Activated naive CD8-positive, alpha-beta T cell treated with anti-CD3 and anti-CD28 coated beads, Interleukin-2, amount 10 ng/mL, durations not matched to agents 7 days and 5 days (primary cell): ENCODE measurements at regions of chr6 and their contacts with region 1.

Region 1: GRCh38 chr6:27809939-27810767 is 102.0 kb downstream of the OR2B2 start:
- DNase-seq: peak; percentile 83
- ATAC-seq: peak; percentile 38
- H3K4me3 Mint-ChIP-seq: peak overlapping the region; percentile 89
- H3K27ac Mint-ChIP-seq: peak overlapping the region; percentile 97
- H3K4me1 Mint-ChIP-seq: peaks cover 52% of the 10 kb centered on the region
- H3K27me3 Mint-ChIP-seq: no peaks in the 10 kb centered on the region

Region 2: GRCh38 chr6:26045065-26045927 is 1764.9 kb before region 1 on chr6:
- POLR2A ChIA-PET with region 1: interaction called, 14 read pairs
- DNase-seq: peak; percentile 82
- ATAC-seq: peak; percentile 56
- H3K4me3 Mint-ChIP-seq: peak overlapping the region; percentile 86
- H3K27ac Mint-ChIP-seq: peak overlapping the region; percentile 99
- H3K4me1 Mint-ChIP-seq: peaks cover 41% of the 10 kb centered on the region
- H3K27me3 Mint-ChIP-seq: no peaks in the 10 kb centered on the region

Region 3: DNA sequence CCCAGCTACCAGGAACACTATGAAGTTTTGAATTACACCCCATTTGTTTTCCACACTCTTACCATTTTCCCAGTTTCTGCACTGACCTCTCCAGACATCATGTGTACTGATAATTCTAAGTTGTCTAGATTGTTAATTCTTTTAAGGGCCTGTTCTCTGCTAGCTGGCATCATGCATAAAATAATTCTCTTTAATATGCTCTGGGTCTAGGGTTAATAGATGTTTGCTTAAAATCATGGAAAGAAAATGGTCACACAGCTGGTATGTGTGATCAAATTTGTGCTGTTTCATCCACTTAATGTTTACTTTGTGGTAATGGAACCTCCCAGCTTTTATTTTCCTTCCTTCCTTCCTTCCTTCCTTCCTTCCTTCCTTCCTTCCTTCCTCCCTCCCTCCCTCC is 1673.8 kb before region 1 on chr6:
- POLR2A ChIA-PET with region 1: no interaction called
- DNase-seq: no peak
- ATAC-seq: no peak
- H3K4me3 Mint-ChIP-seq: no peak overlapping the region
- H3K27ac Mint-ChIP-seq: no peak overlapping the region
- H3K4me1 Mint-ChIP-seq: peaks cover 12% of the 10 kb centered on the region
- H3K27me3 Mint-ChIP-seq: no peaks in the 10 kb centered on the region

Region 4: GRCh38 chr6:26249957-26250697 is 1560.0 kb before region 1 on chr6:
- POLR2A ChIA-PET with region 1: interaction called, 22 read pairs
- DNase-seq: peak; percentile 79
- ATAC-seq: peak; percentile 53
- H3K4me3 Mint-ChIP-seq: peak overlapping the region; percentile 90
- H3K27ac Mint-ChIP-seq: peak overlapping the region; percentile 99
- H3K4me1 Mint-ChIP-seq: peaks cover 16% of the 10 kb centered on the region
- H3K27me3 Mint-ChIP-seq: no peaks in the 10 kb centered on the region

Region 5: DNA sequence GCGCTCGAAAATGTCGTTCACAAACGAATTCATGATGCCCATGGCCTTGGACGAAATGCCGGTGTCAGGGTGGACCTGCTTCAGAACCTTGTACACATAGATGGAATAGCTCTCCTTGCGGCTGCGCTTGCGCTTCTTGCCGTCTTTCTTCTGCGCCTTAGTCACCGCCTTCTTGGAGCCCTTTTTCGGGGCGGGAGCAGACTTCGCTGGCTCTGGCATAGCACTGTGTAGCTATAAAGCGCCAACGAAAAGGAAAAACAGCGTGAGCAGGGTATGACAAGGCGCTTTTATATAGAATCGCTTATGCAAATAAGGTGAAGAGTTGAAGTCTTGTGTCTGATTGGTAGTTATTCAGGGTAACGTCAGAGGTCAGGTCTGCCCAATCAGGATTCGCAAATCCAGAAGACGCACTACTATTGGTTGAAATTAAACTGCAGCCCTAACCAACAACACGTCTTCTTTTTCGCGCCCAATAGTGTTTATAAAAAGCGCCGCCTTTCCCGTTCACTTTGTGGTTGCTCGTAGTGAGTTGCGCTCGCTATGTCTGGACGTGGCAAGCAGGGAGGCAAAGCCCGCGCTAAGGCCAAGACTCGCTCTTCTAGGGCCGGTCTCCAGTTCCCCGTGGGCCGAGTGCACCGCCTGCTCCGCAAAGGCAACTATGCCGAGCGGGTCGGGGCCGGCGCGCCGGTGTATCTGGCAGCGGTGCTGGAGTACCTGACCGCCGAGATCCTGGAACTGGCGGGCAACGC is 677.4 kb before region 1 on chr6:
- POLR2A ChIA-PET with region 1: interaction called, 323 read pairs
- DNase-seq: peak; percentile 90
- ATAC-seq: peak; percentile 76
- H3K4me3 Mint-ChIP-seq: no peak overlapping the region
- H3K27ac Mint-ChIP-seq: no peak overlapping the region
- H3K4me1 Mint-ChIP-seq: peaks cover 46% of the 10 kb centered on the region
- H3K27me3 Mint-ChIP-seq: no peaks in the 10 kb centered on the region

Region 6: GRCh38 chr6:27472617-27473400 is 337.3 kb before region 1 on chr6 and contains the start of gene ZNF184:
- POLR2A ChIA-PET with region 1: interaction called, 17 read pairs
- DNase-seq: peak; percentile 85
- ATAC-seq: peak; percentile 87
- H3K4me3 Mint-ChIP-seq: peak within 1 kb of the TSS; percentile 92
- H3K27ac Mint-ChIP-seq: peak within 1 kb of the TSS; percentile 95
- H3K4me1 Mint-ChIP-seq: peaks cover 34% of the 10 kb centered on the region
- H3K27me3 Mint-ChIP-seq: no peaks in the 10 kb centered on the region
- total RNA-seq, gene ZNF184: 13.1 to 14.1 TPM

Region 7: DNA sequence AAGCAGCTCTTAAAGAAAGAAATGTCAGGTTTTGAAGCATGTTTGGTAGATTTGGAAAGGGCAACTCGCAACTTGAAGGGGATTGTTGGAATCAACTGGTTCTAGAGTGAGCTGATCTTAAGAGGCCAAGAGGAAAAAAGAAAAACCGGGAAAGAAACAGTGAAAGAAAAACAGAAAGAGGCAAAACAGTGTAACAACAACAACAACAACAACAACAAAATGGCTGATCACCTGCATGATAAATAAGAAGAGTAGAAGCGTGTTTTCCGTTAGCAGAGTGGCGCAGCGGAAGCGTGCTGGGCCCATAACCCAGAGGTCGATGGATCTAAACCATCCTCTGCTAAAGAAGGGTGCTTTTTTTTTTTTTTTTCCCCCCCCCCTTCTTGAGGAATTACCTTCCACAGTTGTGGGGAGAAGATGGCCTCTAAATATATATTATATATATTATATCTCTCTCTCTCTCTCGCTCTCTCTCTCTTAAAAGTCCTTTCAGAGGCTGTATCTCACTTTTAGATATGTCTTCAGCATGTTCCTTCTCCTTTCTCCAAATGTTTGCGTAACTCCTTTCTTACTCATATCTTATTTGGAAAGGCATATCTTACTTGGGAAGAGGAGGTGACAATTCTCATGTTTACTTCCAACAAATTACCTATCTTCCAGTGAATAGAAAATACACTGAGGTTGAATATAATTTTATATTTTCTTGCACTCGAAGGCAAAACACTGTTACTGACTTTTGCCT is 32.4 kb before region 1 on chr6:
- POLR2A ChIA-PET with region 1: no interaction called
- DNase-seq: no peak
- ATAC-seq: no peak
- H3K4me3 Mint-ChIP-seq: no peak overlapping the region
- H3K27ac Mint-ChIP-seq: no peak overlapping the region
- H3K4me1 Mint-ChIP-seq: no peaks in the 10 kb centered on the region
- H3K27me3 Mint-ChIP-seq: peaks cover 29% of the 10 kb centered on the region

Region 8: GRCh38 chr6:27825025-27825793 is 15.1 kb after region 1 on chr6:
- POLR2A ChIA-PET with region 1: interaction called, 478 read pairs
- DNase-seq: no peak
- ATAC-seq: peak; percentile 2
- H3K4me3 Mint-ChIP-seq: peak overlapping the region; percentile 90
- H3K27ac Mint-ChIP-seq: peak overlapping the region; percentile 99
- H3K4me1 Mint-ChIP-seq: peaks cover 39% of the 10 kb centered on the region
- H3K27me3 Mint-ChIP-seq: no peaks in the 10 kb centered on the region

Region 9: GRCh38 chr6:27847706-27848105 is 37.6 kb after region 1 on chr6:
- POLR2A ChIA-PET with region 1: no interaction called
- DNase-seq: no peak
- ATAC-seq: no peak
- H3K4me3 Mint-ChIP-seq: no peak overlapping the region
- H3K27ac Mint-ChIP-seq: no peak overlapping the region
- H3K4me1 Mint-ChIP-seq: peaks cover 2% of the 10 kb centered on the region
- H3K27me3 Mint-ChIP-seq: peaks cover 8% of the 10 kb centered on the region